B cell (primary cell): ENCODE measurements at regions of chr12 and their contacts with region 1.

Region 1: DNA sequence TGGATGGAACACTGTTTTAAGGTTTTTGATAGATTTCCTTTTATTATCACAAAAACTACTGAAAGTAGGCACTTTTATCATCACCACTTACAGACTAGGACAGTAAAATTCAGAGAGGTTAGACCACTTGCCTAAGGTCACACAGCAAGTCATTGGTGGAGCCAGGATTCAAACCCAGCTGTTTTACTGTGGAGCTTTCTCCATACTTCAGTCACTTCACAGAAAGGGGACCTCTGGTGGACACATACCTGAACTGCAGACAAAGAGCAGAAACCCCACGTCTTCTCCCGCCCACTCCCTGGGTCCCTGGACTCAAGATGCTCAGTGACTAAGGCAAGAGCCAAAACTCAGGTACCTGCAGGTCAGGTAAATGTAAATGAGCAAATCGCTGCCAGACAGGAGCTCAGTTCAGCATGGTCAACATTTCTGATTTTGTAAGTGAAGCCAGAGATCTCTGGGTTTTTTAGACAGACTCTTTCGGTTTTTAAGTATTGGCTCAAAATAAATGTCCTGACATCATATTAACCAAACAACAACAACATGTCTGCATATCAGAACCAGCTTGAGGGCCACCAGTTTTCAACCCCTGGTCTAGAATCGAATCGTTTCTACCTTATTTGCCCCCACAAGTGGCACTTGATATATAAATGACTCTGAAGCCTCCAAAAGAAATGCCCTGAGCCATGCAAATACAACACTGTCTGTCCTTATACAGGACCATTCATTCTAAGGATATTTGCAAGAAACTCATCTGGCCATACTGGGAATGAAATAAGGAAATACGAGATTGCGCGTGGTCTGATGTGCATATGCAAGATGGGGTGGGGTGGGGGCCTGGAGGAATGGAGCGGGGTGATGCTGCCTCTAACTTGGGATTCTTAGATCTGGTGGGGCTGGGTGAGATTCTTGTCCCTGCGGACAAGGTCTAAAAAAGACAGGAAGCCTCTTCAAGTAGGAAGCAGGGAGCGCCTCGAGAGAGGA is 110.9 kb downstream of the KSR2 start:
- DNase-seq: peak; percentile 37
- ATAC-seq: peak; percentile 41
- H3K4me3 ChIP-seq: no peak overlapping the region
- H3K4me3 Mint-ChIP-seq: no peak overlapping the region
- H3K27ac ChIP-seq: no peak overlapping the region
- H3K27ac Mint-ChIP-seq: no peak overlapping the region
- H3K4me1 ChIP-seq: no peaks in the 10 kb centered on the region
- H3K4me1 Mint-ChIP-seq: no peaks in the 10 kb centered on the region
- H3K27me3 ChIP-seq: peaks cover 0 to 1% (median 0%) of the 10 kb centered on the region in 4 experiments
- H3K27me3 Mint-ChIP-seq: peaks cover 2% of the 10 kb centered on the region
- CTCF ChIP-seq: peak; percentile 62

Region 2: GRCh38 chr12:117212563-117213190 is 645.2 kb before region 1 on chr12:
- CTCF ChIA-PET with region 1: no interaction called
- POLR2A ChIA-PET with region 1: no interaction called
- intact Hi-C with region 1: loop called (anchors 5 kb)
- DNase-seq: peak; percentile 65
- ATAC-seq: peak; percentile 47
- H3K4me3 ChIP-seq: no peak overlapping the region
- H3K4me3 Mint-ChIP-seq: no peak overlapping the region
- H3K27ac ChIP-seq: no peak overlapping the region
- H3K27ac Mint-ChIP-seq: no peak overlapping the region
- H3K4me1 ChIP-seq: no peaks in the 10 kb centered on the region
- H3K4me1 Mint-ChIP-seq: no peaks in the 10 kb centered on the region
- H3K27me3 ChIP-seq: peaks cover 0 to 3% (median 0%) of the 10 kb centered on the region in 4 experiments
- H3K27me3 Mint-ChIP-seq: peaks cover 38% of the 10 kb centered on the region
- CTCF ChIP-seq: peak; percentile 88

Region 3: DNA sequence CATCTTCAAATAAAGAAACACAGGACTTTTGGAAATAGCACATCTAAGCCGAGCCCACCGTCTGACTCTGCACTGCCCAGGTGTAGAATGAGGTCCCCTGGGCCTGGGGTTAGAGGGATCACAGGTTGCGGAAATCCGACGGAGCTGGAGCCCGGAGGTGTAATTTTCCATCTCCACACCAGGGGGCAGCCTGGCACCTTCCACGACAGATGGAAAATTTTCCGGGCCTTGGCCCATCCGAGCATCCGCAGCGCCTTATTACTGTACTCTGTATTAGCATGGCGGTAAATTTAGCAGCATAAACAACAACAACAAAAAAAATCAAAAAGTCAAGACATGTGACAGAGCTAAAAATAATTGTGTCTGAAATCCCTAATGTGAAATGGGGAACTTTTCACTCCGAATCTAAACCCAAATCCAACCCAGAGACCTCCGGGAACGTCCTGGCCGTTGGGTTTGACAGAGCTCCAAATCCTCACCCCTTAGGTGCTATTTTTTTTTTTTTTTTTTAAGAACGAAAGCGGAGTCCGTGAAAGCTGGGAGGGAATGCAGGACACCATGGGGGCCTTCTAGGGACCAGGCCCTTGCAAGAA is 17.0 kb after region 1 on chr12:
- CTCF ChIA-PET with region 1: interaction called, 10 read pairs
- POLR2A ChIA-PET with region 1: no interaction called
- intact Hi-C with region 1: no loop called
- DNase-seq: peak; percentile 56
- ATAC-seq: peak; percentile 36
- H3K4me3 ChIP-seq: no peak overlapping the region
- H3K4me3 Mint-ChIP-seq: no peak overlapping the region
- H3K27ac ChIP-seq: no peak overlapping the region
- H3K27ac Mint-ChIP-seq: peak overlapping the region; percentile 68
- H3K4me1 ChIP-seq: peaks cover 0 to 6% of the 10 kb centered on the region in 2 donors
- H3K4me1 Mint-ChIP-seq: peaks cover 5% of the 10 kb centered on the region
- H3K27me3 ChIP-seq: peaks cover 0 to 16% (median 7%) of the 10 kb centered on the region in 4 experiments
- H3K27me3 Mint-ChIP-seq: peaks cover 25% of the 10 kb centered on the region
- CTCF ChIP-seq: peak; percentile 87